Gastrocnemius medialis (tissue), 4 donors: ENCODE measurements at regions of chr1 and their contacts with region 1.

Region 1: GRCh38 chr1:113871597-113872113 is at the start of gene PTPN22:
- DNase-seq: peak; percentile 11 to 21
- ATAC-seq: no peak
- H3K4me3 ChIP-seq: no peak within 1 kb of the TSS
- H3K27ac ChIP-seq: peak within 1 kb of the TSS in 1 of 4 donors; percentile 6
- H3K4me1 ChIP-seq: no peaks in the 10 kb centered on the region
- H3K27me3 ChIP-seq: no peaks in the 10 kb centered on the region
- CTCF ChIP-seq: no peak
- POLR2A ChIP-seq: no peak
- total RNA-seq, gene PTPN22: 0.10 to 1.7 (median 0.63) TPM

Region 2: GRCh38 chr1:113858418-113858817 is 13.2 kb before region 1 on chr1:
- in situ Hi-C with region 1: no loop called
- intact Hi-C with region 1: loop called (anchors 2 kb)
- DNase-seq: no peak
- ATAC-seq: no peak
- H3K4me3 ChIP-seq: no peak overlapping the region
- H3K27ac ChIP-seq: no peak overlapping the region
- H3K4me1 ChIP-seq: no peaks in the 10 kb centered on the region
- H3K27me3 ChIP-seq: no peaks in the 10 kb centered on the region
- CTCF ChIP-seq: no peak
- POLR2A ChIP-seq: no peak

Region 3: GRCh38 chr1:113998327-113998726 is 126.7 kb after region 1 on chr1:
- in situ Hi-C with region 1: no loop called
- intact Hi-C with region 1: no loop called
- DNase-seq: no peak
- ATAC-seq: no peak
- H3K4me3 ChIP-seq: no peak overlapping the region
- H3K27ac ChIP-seq: no peak overlapping the region
- H3K4me1 ChIP-seq: no peaks in the 10 kb centered on the region
- H3K27me3 ChIP-seq: no peaks in the 10 kb centered on the region
- CTCF ChIP-seq: no peak
- POLR2A ChIP-seq: no peak